ENCODE measurements at regions of chr3 and their contacts with region 1.

Region 1: DNA sequence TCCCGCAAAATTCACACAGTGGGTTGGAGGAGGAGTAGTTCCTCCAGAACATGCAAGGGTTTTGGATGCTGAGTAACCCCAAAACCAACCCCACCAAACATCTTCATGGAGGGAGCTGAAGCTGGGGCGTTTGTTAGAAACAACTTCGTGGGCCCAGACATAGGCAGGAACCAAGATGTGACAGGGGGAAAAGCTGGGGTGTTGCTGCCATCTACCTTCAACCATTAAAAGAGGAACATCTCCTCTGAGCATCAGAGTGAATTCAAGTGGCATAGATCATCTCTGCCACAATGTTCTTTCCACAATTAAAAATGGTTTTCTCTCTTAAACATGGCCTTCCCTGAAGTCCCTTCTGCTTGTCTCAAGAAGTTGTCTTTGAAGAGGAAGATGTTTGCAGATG is 20.5 kb downstream of the SIDT1 start:
- DNase-seq: peak; percentile 48
- H3K4me3 Mint-ChIP-seq: no peak overlapping the region
- H3K27ac Mint-ChIP-seq: no peak overlapping the region
- H3K4me1 Mint-ChIP-seq: peaks cover 18% of the 10 kb centered on the region
- H3K27me3 Mint-ChIP-seq: no peaks in the 10 kb centered on the region

Region 2: GRCh38 chr3:113436809-113437208 is 116.0 kb before region 1 on chr3:
- CTCF ChIA-PET with region 1: no interaction called
- intact Hi-C with region 1: no loop called
- DNase-seq: peak; percentile 6
- H3K4me3 Mint-ChIP-seq: no peak overlapping the region
- H3K27ac Mint-ChIP-seq: no peak overlapping the region
- H3K4me1 Mint-ChIP-seq: no peaks in the 10 kb centered on the region
- H3K27me3 Mint-ChIP-seq: no peaks in the 10 kb centered on the region

Region 3: DNA sequence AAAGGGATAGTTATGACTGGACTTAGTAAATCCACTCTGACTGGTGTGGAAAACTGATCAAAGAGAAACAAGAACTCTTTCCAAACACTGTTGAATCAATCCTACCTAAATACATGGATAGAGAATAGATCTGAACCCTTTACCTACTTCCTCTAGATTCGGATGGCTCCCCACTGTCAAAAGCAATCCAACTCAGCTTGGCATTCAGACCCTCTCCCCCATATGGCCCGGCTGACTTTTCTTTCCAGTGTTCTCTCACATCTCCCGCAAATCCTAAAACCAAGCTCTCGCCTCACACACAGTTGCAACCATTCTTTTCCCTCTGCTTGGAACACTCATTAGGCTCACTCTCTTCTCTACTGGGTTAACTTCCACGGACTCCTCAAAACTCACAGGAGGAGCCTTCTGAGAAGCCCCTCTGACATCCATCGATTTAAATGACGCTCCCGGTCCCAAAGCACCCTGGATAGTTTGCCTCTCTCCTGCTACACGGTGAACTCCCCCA is 38.5 kb before region 1 on chr3:
- CTCF ChIA-PET with region 1: interaction called, 7 read pairs
- intact Hi-C with region 1: loop called (anchors 2 kb)
- DNase-seq: no peak
- H3K4me3 Mint-ChIP-seq: no peak overlapping the region
- H3K27ac Mint-ChIP-seq: no peak overlapping the region
- H3K4me1 Mint-ChIP-seq: peaks cover 12% of the 10 kb centered on the region
- H3K27me3 Mint-ChIP-seq: peaks cover 12% of the 10 kb centered on the region

Region 4: DNA sequence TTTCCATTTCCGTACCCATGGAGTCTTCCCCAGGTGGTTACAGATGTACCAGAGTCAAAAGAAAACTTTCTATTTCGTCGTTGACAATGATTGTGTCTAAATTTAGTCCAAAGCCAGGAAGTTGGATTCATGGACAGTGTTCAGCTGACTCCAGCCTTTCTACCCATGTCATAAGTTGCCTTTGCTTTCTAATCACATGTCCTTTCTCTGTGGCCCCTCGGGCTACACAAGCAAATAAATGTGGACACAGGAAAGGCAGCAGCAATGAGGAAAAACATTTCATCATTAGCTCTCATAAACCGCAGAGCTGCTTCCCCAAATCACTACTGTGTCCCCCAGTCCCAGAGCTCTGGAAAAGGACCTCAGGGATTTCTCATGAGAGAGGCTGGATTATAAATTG is 61.6 kb after region 1 on chr3:
- CTCF ChIA-PET with region 1: no interaction called
- intact Hi-C with region 1: no loop called
- DNase-seq: no peak
- H3K4me3 Mint-ChIP-seq: no peak overlapping the region
- H3K27ac Mint-ChIP-seq: no peak overlapping the region
- H3K4me1 Mint-ChIP-seq: no peaks in the 10 kb centered on the region
- H3K27me3 Mint-ChIP-seq: no peaks in the 10 kb centered on the region

Measured in activated naive CD4-positive, alpha-beta T cell treated with anti-CD3 and anti-CD28 coated beads for 36 hours (primary cell).